ENCODE measurements at regions of chr3 and their contacts with region 1.

Region 1: GRCh38 chr3:101195951-101196713 is 124.2 kb downstream of the IMPG2 start:
- DNase-seq: no peak
- H3K4me3 ChIP-seq: no peak overlapping the region
- H3K4me3 Mint-ChIP-seq: no peak overlapping the region
- H3K27ac ChIP-seq: no peak overlapping the region
- H3K27ac Mint-ChIP-seq: no peak overlapping the region
- H3K4me1 ChIP-seq: no peaks in the 10 kb centered on the region
- H3K4me1 Mint-ChIP-seq: no peaks in the 10 kb centered on the region
- H3K27me3 ChIP-seq: no peaks in the 10 kb centered on the region
- H3K27me3 Mint-ChIP-seq: peaks cover 5 to 8% of the 10 kb centered on the region in 2 donors

Region 2: GRCh38 chr3:100463002-100463401 is 733.1 kb before region 1 on chr3:
- CTCF ChIA-PET with region 1: no interaction called
- POLR2A ChIA-PET with region 1: no interaction called
- intact Hi-C with region 1: loop called (anchors 10 kb)
- DNase-seq: peak in 2 of 5 donors; percentile 1 to 12
- H3K4me3 ChIP-seq: no peak overlapping the region
- H3K4me3 Mint-ChIP-seq: no peak overlapping the region
- H3K27ac ChIP-seq: no peak overlapping the region
- H3K27ac Mint-ChIP-seq: no peak overlapping the region
- H3K4me1 ChIP-seq: no peaks in the 10 kb centered on the region
- H3K4me1 Mint-ChIP-seq: peaks cover 3 to 10% (median 6%) of the 10 kb centered on the region in 4 donors
- H3K27me3 ChIP-seq: no peaks in the 10 kb centered on the region
- H3K27me3 Mint-ChIP-seq: peaks cover 0 to 4% of the 10 kb centered on the region in 2 donors